CD8-positive, alpha-beta T cell (primary cell): ENCODE measurements at regions of chr14 and their contacts with region 1.

Region 1: GRCh38 chr14:51979088-51979709 is 10.1 kb upstream of the RTRAF start:
- DNase-seq: peak; percentile 62 to 90 (median 82)
- ATAC-seq: peak; percentile 86
- H3K4me3 ChIP-seq: no peak overlapping the region
- H3K4me3 Mint-ChIP-seq: no peak overlapping the region
- H3K27ac ChIP-seq: no peak overlapping the region
- H3K27ac Mint-ChIP-seq: no peak overlapping the region
- H3K4me1 ChIP-seq: peaks cover 9% of the 10 kb centered on the region
- H3K4me1 Mint-ChIP-seq: peaks cover 6% of the 10 kb centered on the region
- H3K27me3 ChIP-seq: no peaks in the 10 kb centered on the region
- H3K27me3 Mint-ChIP-seq: no peaks in the 10 kb centered on the region
- CTCF ChIP-seq: peak; percentile 97

Region 2: GRCh38 chr14:51006781-51007211 is 972.4 kb before region 1 on chr14:
- CTCF ChIA-PET with region 1: no interaction called
- POLR2A ChIA-PET with region 1: no interaction called
- intact Hi-C with region 1: no loop called
- DNase-seq: no peak
- ATAC-seq: no peak
- H3K4me3 ChIP-seq: no peak overlapping the region
- H3K4me3 Mint-ChIP-seq: no peak overlapping the region
- H3K27ac ChIP-seq: no peak overlapping the region
- H3K27ac Mint-ChIP-seq: no peak overlapping the region
- H3K4me1 ChIP-seq: no peaks in the 10 kb centered on the region
- H3K4me1 Mint-ChIP-seq: no peaks in the 10 kb centered on the region
- H3K27me3 ChIP-seq: no peaks in the 10 kb centered on the region
- H3K27me3 Mint-ChIP-seq: peaks cover 3% of the 10 kb centered on the region
- CTCF ChIP-seq: no peak

Region 3: GRCh38 chr14:51283402-51284085 is 695.7 kb before region 1 on chr14:
- CTCF ChIA-PET with region 1: interaction called, 8 read pairs
- POLR2A ChIA-PET with region 1: no interaction called
- intact Hi-C with region 1: loop called (anchors 1 kb)
- DNase-seq: peak in 2 of 9 experiments; percentile 48 to 64
- ATAC-seq: no peak
- H3K4me3 ChIP-seq: no peak overlapping the region
- H3K4me3 Mint-ChIP-seq: no peak overlapping the region
- H3K27ac ChIP-seq: no peak overlapping the region
- H3K27ac Mint-ChIP-seq: no peak overlapping the region
- H3K4me1 ChIP-seq: no peaks in the 10 kb centered on the region
- H3K4me1 Mint-ChIP-seq: no peaks in the 10 kb centered on the region
- H3K27me3 ChIP-seq: no peaks in the 10 kb centered on the region
- H3K27me3 Mint-ChIP-seq: no peaks in the 10 kb centered on the region
- CTCF ChIP-seq: peak; percentile 75

Region 4: DNA sequence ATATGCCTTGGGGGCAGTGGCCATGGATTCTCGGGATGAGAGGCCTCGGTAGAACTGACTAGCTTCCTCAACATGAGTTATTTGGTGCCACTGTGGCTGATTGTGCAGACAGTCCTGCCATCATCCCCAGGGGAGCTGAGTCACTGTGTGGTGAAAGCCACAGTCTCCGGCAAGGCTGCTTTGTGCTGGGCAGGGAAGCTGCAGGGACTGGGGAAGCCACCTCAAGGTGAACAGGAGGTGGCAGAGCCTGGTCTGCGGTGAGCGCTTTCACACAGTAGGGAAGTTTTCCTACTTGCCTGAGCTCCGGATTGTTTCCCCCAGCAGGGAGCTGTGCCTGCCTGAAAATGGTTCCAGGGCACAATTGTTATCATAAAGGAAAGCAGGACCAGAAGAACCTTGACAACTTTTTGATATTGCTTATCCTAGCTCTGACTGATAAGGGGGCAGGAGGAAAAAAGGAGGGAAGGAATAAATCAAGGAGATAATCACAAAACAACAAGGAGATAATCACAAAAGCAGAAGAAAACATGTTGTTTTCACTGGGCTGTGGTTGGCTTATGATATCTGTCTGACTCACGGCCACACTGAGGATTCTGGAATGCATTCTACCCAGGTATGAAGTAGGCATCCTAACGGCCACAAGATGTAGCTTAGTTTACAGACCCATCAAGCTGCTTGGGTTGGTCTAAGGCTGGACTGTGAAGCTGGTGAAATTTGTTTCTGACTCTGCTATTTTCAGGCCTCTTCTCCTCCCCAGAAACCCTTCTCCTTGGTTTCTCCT is 151.0 kb before region 1 on chr14:
- CTCF ChIA-PET with region 1: interaction called, 11 read pairs
- POLR2A ChIA-PET with region 1: no interaction called
- intact Hi-C with region 1: loop called in 1 of 2 experiments (anchors 5 kb)
- DNase-seq: peak; percentile 13 to 81 (median 72)
- ATAC-seq: peak; percentile 97
- H3K4me3 ChIP-seq: no peak overlapping the region
- H3K4me3 Mint-ChIP-seq: no peak overlapping the region
- H3K27ac ChIP-seq: no peak overlapping the region
- H3K27ac Mint-ChIP-seq: no peak overlapping the region
- H3K4me1 ChIP-seq: peaks cover 10% of the 10 kb centered on the region
- H3K4me1 Mint-ChIP-seq: no peaks in the 10 kb centered on the region
- H3K27me3 ChIP-seq: no peaks in the 10 kb centered on the region
- H3K27me3 Mint-ChIP-seq: peaks cover 3% of the 10 kb centered on the region
- CTCF ChIP-seq: no peak

Region 5: DNA sequence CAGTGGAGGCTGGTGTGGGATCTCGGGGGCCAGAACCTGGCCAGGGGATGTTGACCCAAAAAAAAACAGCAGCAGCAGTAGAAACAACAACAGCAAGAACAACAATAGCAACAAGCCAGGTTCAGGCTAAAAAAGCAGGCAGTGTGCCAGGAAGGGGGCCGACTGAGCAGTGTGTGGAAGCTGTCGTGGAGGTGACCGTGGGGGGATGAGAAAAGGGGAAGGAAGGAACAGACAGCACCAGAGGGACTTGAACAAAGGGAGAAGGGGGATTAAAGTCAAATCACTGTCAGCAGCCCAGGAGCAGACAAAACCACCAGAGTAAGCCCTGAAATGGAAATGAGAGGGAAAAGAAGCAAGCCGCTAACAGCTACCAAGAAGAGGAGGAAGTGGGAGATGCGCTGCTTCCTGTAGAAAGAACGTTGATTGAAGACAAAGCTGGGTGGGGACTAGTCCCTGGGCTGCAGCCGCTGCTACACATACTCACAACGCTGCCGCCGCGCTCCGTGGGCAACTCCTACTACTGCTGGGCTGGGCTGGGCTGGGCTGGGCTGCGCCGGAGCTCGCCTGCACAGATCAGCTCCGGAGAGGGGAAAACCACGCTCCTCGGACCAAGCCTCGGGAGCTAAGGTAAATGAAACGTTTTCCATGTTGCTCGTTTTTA is 118.9 kb before region 1 on chr14 and contains the start of gene GNG2:
- CTCF ChIA-PET with region 1: interaction called, 40 read pairs
- POLR2A ChIA-PET with region 1: interaction called, 10 read pairs
- intact Hi-C with region 1: loop called in 1 of 2 experiments (anchors 1 kb)
- DNase-seq: peak; percentile 71 to 94 (median 83)
- ATAC-seq: peak; percentile 95
- H3K4me3 ChIP-seq: peak within 1 kb of the TSS; percentile 86 to 90
- H3K4me3 Mint-ChIP-seq: peak within 1 kb of the TSS; percentile 98
- H3K27ac ChIP-seq: peak within 1 kb of the TSS; percentile 88
- H3K27ac Mint-ChIP-seq: peak within 1 kb of the TSS; percentile 95
- H3K4me1 ChIP-seq: peaks cover 50% of the 10 kb centered on the region
- H3K4me1 Mint-ChIP-seq: peaks cover 66% of the 10 kb centered on the region
- H3K27me3 ChIP-seq: no peaks in the 10 kb centered on the region
- H3K27me3 Mint-ChIP-seq: no peaks in the 10 kb centered on the region
- CTCF ChIP-seq: no peak
- total RNA-seq, gene GNG2: 166 to 169 TPM

Region 6: DNA sequence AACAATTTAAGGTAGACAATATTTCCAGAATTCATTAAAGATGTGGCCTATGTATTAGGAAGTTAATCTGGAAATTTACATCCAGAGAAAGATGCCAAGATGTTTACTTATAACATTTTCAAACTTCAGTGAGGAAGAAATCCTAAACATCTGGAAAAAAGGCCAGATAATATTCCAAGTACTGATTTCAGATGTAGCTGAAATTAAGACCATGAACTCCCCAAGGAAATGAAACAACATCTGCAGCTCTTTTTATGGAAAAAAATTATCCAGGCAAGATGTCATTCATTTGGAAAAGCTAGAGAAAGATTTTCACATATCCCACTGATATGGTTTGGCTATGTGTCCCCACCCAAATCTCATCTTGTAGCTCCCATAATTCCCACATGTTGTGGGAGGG is 83.8 kb before region 1 on chr14:
- CTCF ChIA-PET with region 1: interaction called, 3 read pairs
- POLR2A ChIA-PET with region 1: no interaction called
- intact Hi-C with region 1: loop called in 1 of 2 experiments (anchors 5 kb)
- DNase-seq: no peak
- ATAC-seq: no peak
- H3K4me3 ChIP-seq: no peak overlapping the region
- H3K4me3 Mint-ChIP-seq: no peak overlapping the region
- H3K27ac ChIP-seq: no peak overlapping the region
- H3K27ac Mint-ChIP-seq: no peak overlapping the region
- H3K4me1 ChIP-seq: peaks cover 19% of the 10 kb centered on the region
- H3K4me1 Mint-ChIP-seq: peaks cover 84% of the 10 kb centered on the region
- H3K27me3 ChIP-seq: no peaks in the 10 kb centered on the region
- H3K27me3 Mint-ChIP-seq: no peaks in the 10 kb centered on the region
- CTCF ChIP-seq: no peak

Region 7: DNA sequence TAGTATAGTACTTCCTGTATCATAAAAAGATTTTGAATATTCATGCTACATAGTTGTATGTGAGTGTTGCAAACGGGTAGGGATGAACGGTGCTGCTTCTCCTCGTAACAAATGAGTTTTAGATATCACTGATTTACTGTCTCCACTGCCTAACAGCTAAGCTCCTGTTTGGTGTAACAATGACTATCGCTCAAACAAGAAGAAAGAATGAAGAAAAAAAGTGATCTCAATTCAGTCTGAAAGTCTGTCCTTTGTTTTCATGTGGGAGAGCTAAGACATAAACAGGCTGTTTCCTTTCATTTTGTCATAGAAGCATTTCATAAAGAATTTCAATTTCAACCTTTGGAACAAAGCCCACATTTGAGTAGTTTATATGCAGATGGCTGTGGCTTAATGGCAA is 15.9 kb before region 1 on chr14:
- CTCF ChIA-PET with region 1: interaction called, 40 read pairs
- POLR2A ChIA-PET with region 1: no interaction called
- intact Hi-C with region 1: no loop called
- DNase-seq: peak in 1 of 9 experiments; percentile 51
- ATAC-seq: peak; percentile 70
- H3K4me3 ChIP-seq: no peak overlapping the region
- H3K4me3 Mint-ChIP-seq: peak overlapping the region; percentile 64
- H3K27ac ChIP-seq: peak overlapping the region in 1 of 2 experiments; percentile 23
- H3K27ac Mint-ChIP-seq: peak overlapping the region; percentile 86
- H3K4me1 ChIP-seq: peaks cover 26% of the 10 kb centered on the region
- H3K4me1 Mint-ChIP-seq: peaks cover 48% of the 10 kb centered on the region
- H3K27me3 ChIP-seq: no peaks in the 10 kb centered on the region
- H3K27me3 Mint-ChIP-seq: no peaks in the 10 kb centered on the region
- CTCF ChIP-seq: no peak

Region 8: DNA sequence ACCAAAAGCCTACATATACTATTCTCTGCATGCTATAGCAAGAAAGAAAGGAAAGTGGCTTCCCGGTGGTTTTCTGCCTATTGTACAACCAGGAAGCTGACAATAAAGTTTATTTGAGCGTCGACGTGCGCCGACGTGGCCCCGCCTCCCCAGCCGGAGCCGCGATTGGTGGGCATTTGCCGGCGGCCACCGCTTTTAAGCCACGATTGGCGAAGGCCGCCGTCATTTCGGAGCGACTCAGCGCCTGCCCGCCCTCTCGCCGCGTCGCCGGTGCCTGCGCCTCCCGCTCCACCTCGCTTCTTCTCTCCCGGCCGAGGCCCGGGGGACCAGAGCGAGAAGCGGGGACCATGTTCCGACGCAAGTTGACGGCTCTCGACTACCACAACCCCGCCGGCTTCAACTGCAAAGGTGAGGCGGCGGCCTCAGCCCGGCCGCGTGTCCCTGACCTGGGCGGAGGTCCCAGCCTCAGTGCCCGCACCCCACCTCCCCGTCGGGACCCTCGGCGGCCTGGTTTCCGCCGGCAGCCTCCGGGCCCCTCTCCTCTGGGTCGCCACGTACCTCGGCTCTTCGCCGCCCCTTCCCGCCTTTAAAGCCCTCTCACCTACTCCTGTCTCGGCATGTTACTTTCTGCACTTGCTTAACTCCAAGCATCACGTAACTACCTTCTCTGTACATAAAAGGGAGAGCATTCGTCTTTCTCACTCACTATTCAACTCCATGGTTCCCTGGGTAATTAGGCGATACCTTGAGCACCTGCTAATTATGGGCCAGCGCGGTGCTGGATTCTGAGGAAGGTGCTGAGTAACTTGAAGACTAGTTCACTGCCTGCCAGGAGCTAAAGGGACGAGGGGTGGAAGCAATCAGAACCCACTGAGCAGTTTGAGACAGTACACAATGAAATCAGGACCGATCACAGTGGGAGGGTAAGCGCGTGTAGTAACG is 10.4 kb after region 1 on chr14 and contains the start of gene RTRAF:
- CTCF ChIA-PET with region 1: interaction called, 8 read pairs
- POLR2A ChIA-PET with region 1: no interaction called
- intact Hi-C with region 1: loop called in 1 of 2 experiments (anchors 1 kb)
- DNase-seq: peak; percentile 77 to 97 (median 91)
- ATAC-seq: peak; percentile 96
- H3K4me3 ChIP-seq: peak within 1 kb of the TSS; percentile 65 to 84
- H3K4me3 Mint-ChIP-seq: peak within 1 kb of the TSS; percentile 94
- H3K27ac ChIP-seq: peak within 1 kb of the TSS; percentile 84 to 85
- H3K27ac Mint-ChIP-seq: peak within 1 kb of the TSS; percentile 94
- H3K4me1 ChIP-seq: peaks cover 15% of the 10 kb centered on the region
- H3K4me1 Mint-ChIP-seq: peaks cover 46% of the 10 kb centered on the region
- H3K27me3 ChIP-seq: no peaks in the 10 kb centered on the region
- H3K27me3 Mint-ChIP-seq: no peaks in the 10 kb centered on the region
- CTCF ChIP-seq: no peak
- total RNA-seq, gene RTRAF: 155 to 161 TPM

Region 9: DNA sequence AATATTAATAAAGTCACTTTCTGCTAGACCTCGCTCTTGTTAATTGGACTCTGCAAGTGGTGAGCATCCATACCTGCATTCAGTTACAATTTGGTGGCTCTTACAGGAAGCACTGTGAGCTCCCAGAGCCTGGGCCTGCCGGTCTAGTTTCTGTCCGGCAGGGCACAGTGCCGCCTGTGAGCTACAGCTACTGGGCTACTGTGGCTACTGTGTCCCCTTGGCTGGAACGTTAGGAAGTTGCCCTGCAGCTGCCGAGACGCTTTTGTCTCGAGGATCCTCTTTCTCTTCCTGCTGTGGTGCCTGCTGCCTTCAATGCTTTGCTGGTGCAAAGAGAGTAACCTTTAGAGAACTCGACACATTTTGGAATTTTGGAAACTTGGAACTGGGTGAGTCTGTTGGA is 243.7 kb after region 1 on chr14:
- CTCF ChIA-PET with region 1: no interaction called
- POLR2A ChIA-PET with region 1: no interaction called
- intact Hi-C with region 1: no loop called
- DNase-seq: no peak
- ATAC-seq: no peak
- H3K4me3 ChIP-seq: no peak overlapping the region
- H3K4me3 Mint-ChIP-seq: no peak overlapping the region
- H3K27ac ChIP-seq: no peak overlapping the region
- H3K27ac Mint-ChIP-seq: no peak overlapping the region
- H3K4me1 ChIP-seq: peaks cover 6% of the 10 kb centered on the region
- H3K4me1 Mint-ChIP-seq: peaks cover 9% of the 10 kb centered on the region
- H3K27me3 ChIP-seq: no peaks in the 10 kb centered on the region
- H3K27me3 Mint-ChIP-seq: no peaks in the 10 kb centered on the region
- CTCF ChIP-seq: no peak